CD8-positive, alpha-beta T cell (primary cell): ENCODE measurements at regions of chr4 and their contacts with region 1.

Region 1: DNA sequence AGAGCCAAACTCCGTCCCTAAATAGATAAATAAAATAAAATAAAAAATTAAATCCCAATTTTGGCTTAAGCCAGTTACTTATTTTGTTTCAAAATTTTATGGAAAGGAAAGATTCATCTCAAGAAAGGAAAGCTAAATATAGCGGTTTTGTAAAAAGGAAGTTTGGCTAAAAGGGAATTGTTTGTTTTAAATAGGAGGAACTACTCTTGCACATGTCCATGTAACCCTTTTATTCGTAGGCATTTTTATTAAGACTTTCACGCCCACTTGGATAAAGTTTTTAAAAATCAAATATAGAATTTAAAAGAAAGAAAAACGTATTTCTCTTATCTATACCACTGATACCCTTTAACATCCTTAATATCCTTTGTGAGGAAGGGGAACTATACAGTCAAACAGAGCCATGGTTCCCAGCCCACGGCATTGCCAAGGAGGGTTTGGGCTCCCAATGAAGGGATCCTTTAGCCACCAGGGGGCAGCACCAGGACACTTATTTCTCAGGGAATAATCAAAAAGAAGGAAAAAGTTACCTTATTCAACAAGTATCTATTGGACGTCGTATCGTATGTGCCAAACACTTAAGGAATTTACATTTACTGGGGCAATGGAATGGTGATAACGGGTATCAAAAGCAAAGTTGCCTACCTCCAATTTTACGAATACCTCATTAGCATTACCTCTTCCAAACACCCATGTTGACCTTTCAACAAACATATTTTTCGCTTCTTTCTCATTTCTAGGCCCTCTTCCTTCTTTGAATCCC is 27.7 kb downstream of the CDKN2AIP start:
- DNase-seq: peak; percentile 58 to 89 (median 80)
- ATAC-seq: peak; percentile 82
- H3K4me3 ChIP-seq: no peak overlapping the region
- H3K4me3 Mint-ChIP-seq: no peak overlapping the region
- H3K27ac ChIP-seq: no peak overlapping the region
- H3K27ac Mint-ChIP-seq: no peak overlapping the region
- H3K4me1 ChIP-seq: no peaks in the 10 kb centered on the region
- H3K4me1 Mint-ChIP-seq: peaks cover 5% of the 10 kb centered on the region
- H3K27me3 ChIP-seq: no peaks in the 10 kb centered on the region
- H3K27me3 Mint-ChIP-seq: no peaks in the 10 kb centered on the region
- CTCF ChIP-seq: peak; percentile 81

Region 2: GRCh38 chr4:183438458-183439113 is 33.5 kb before region 1 on chr4:
- CTCF ChIA-PET with region 1: no interaction called
- POLR2A ChIA-PET with region 1: no interaction called
- intact Hi-C with region 1: no loop called
- DNase-seq: no peak
- ATAC-seq: no peak
- H3K4me3 ChIP-seq: no peak overlapping the region
- H3K4me3 Mint-ChIP-seq: no peak overlapping the region
- H3K27ac ChIP-seq: no peak overlapping the region
- H3K27ac Mint-ChIP-seq: no peak overlapping the region
- H3K4me1 ChIP-seq: peaks cover 5% of the 10 kb centered on the region
- H3K4me1 Mint-ChIP-seq: peaks cover 17% of the 10 kb centered on the region
- H3K27me3 ChIP-seq: no peaks in the 10 kb centered on the region
- H3K27me3 Mint-ChIP-seq: no peaks in the 10 kb centered on the region
- CTCF ChIP-seq: no peak

Region 3: DNA sequence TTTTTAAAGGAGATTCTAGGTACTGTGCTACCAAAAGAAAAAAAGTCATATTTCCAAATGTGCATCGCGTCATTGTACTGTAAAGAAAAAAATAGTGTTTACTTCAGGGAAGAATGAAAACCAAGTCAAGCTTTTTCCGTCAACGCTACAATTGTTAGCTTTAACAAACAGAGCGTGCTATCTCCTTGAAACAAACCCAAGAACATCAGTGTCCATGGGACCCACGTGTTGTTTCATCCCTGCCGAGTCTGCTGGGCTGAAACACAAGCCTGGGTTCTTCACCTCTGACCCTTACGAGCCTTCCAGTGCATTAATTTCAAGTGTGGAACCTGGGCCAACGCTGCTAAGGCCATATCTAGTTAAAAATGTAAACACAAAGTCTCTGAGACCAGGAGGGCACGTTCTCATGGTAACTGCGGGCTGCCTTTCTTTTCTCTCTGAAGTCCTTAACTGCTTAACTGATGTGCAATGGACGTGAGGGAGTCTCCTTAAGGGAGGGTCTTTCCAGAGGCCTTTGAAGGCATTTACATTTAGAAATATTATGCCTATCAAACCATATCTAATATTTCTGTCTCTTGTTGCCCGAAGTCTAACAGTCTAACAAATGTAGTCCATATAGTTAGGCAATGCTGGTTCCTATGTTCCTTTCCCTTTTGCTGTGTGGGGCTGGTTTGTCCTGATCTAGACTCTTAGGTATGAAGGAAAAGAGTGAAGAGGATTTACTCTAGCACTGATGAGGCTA is 69.1 kb after region 1 on chr4:
- CTCF ChIA-PET with region 1: interaction called, 3 read pairs
- POLR2A ChIA-PET with region 1: no interaction called
- intact Hi-C with region 1: loop called in 1 of 2 experiments (anchors 10 kb)
- DNase-seq: no peak
- ATAC-seq: no peak
- H3K4me3 ChIP-seq: no peak overlapping the region
- H3K4me3 Mint-ChIP-seq: no peak overlapping the region
- H3K27ac ChIP-seq: no peak overlapping the region
- H3K27ac Mint-ChIP-seq: no peak overlapping the region
- H3K4me1 ChIP-seq: no peaks in the 10 kb centered on the region
- H3K4me1 Mint-ChIP-seq: no peaks in the 10 kb centered on the region
- H3K27me3 ChIP-seq: peaks cover 0 to 4% of the 10 kb centered on the region in 2 experiments
- H3K27me3 Mint-ChIP-seq: peaks cover 27% of the 10 kb centered on the region
- CTCF ChIP-seq: no peak

Region 4: GRCh38 chr4:183621875-183622274 is 149.7 kb after region 1 on chr4:
- CTCF ChIA-PET with region 1: interaction called, 4 read pairs
- POLR2A ChIA-PET with region 1: no interaction called
- intact Hi-C with region 1: loop called in 1 of 2 experiments (anchors 1 kb)
- DNase-seq: no peak
- ATAC-seq: no peak
- H3K4me3 ChIP-seq: no peak overlapping the region
- H3K4me3 Mint-ChIP-seq: no peak overlapping the region
- H3K27ac ChIP-seq: no peak overlapping the region
- H3K27ac Mint-ChIP-seq: no peak overlapping the region
- H3K4me1 ChIP-seq: no peaks in the 10 kb centered on the region
- H3K4me1 Mint-ChIP-seq: no peaks in the 10 kb centered on the region
- H3K27me3 ChIP-seq: peaks cover 0 to 2% of the 10 kb centered on the region in 2 experiments
- H3K27me3 Mint-ChIP-seq: peaks cover 13% of the 10 kb centered on the region
- CTCF ChIP-seq: no peak

Region 5: DNA sequence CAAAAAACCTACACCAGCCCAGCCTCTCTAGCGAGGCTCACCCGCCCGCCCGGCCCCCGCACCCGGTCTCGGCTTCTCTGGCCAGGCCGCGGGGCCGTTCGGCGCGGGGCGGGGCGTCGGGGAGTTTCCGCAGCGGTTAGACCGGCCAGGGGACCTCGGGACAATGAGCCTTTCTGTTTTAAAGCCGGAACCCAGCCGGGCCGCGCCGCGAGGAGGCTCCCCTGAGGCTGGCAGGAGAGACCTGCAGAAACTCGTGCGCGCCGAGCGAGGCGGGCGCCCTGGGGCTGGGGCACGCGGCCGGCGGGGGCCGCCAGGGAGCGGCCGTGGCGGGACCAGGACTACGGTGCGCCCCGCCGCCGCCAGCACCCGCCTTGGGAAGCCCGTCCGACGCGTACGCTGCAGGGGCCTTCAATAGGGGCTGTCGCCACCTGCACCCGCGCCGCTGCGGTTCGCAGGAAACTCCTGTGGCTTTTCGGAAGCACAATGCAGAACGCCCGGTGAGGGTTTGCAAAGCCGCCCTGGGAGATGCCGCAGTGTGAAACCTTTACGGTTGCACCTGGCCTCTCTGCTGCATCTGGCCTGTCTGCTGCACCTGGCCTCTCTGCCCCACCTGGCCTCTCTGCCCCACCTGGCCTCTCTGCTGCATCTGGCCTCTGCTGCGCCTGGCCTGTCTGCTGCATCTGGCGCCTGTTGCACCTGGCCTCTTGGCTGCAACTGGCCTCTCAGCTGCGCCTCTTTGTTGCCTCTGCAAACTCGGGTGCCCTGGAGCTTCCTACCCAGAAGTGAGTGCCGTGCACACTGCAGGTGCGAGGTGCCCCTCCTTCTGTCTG is 250.8 kb after region 1 on chr4:
- CTCF ChIA-PET with region 1: interaction called, 3 read pairs
- POLR2A ChIA-PET with region 1: no interaction called
- intact Hi-C with region 1: loop called (anchors 1 to 10 kb)
- DNase-seq: peak; percentile 7 to 73 (median 44)
- ATAC-seq: peak; percentile 51
- H3K4me3 ChIP-seq: peak overlapping the region; percentile 20 to 57
- H3K4me3 Mint-ChIP-seq: peak overlapping the region; percentile 88
- H3K27ac ChIP-seq: no peak overlapping the region
- H3K27ac Mint-ChIP-seq: peak overlapping the region; percentile 80
- H3K4me1 ChIP-seq: peaks cover 7% of the 10 kb centered on the region
- H3K4me1 Mint-ChIP-seq: peaks cover 13% of the 10 kb centered on the region
- H3K27me3 ChIP-seq: no peaks in the 10 kb centered on the region
- H3K27me3 Mint-ChIP-seq: no peaks in the 10 kb centered on the region
- CTCF ChIP-seq: no peak

Region 6: GRCh38 chr4:184168406-184169019 is 696.4 kb after region 1 on chr4:
- CTCF ChIA-PET with region 1: no interaction called
- POLR2A ChIA-PET with region 1: no interaction called
- intact Hi-C with region 1: loop called (anchors 5 kb)
- DNase-seq: peak; percentile 12 to 64 (median 36)
- ATAC-seq: peak; percentile 44
- H3K4me3 ChIP-seq: no peak overlapping the region
- H3K4me3 Mint-ChIP-seq: no peak overlapping the region
- H3K27ac ChIP-seq: no peak overlapping the region
- H3K27ac Mint-ChIP-seq: no peak overlapping the region
- H3K4me1 ChIP-seq: peaks cover 4% of the 10 kb centered on the region
- H3K4me1 Mint-ChIP-seq: peaks cover 2% of the 10 kb centered on the region
- H3K27me3 ChIP-seq: peaks cover 0 to 7% of the 10 kb centered on the region in 2 experiments
- H3K27me3 Mint-ChIP-seq: peaks cover 63% of the 10 kb centered on the region
- CTCF ChIP-seq: peak; percentile 58

Region 7: GRCh38 chr4:184232206-184232820 is 760.2 kb after region 1 on chr4:
- CTCF ChIA-PET with region 1: no interaction called
- POLR2A ChIA-PET with region 1: no interaction called
- intact Hi-C with region 1: no loop called
- DNase-seq: no peak
- ATAC-seq: no peak
- H3K4me3 ChIP-seq: no peak overlapping the region
- H3K4me3 Mint-ChIP-seq: no peak overlapping the region
- H3K27ac ChIP-seq: no peak overlapping the region
- H3K27ac Mint-ChIP-seq: no peak overlapping the region
- H3K4me1 ChIP-seq: peaks cover 21% of the 10 kb centered on the region
- H3K4me1 Mint-ChIP-seq: peaks cover 28% of the 10 kb centered on the region
- H3K27me3 ChIP-seq: no peaks in the 10 kb centered on the region
- H3K27me3 Mint-ChIP-seq: no peaks in the 10 kb centered on the region
- CTCF ChIP-seq: no peak